ENCODE measurements at regions of chr19 and their contacts with region 1.

Region 1: DNA sequence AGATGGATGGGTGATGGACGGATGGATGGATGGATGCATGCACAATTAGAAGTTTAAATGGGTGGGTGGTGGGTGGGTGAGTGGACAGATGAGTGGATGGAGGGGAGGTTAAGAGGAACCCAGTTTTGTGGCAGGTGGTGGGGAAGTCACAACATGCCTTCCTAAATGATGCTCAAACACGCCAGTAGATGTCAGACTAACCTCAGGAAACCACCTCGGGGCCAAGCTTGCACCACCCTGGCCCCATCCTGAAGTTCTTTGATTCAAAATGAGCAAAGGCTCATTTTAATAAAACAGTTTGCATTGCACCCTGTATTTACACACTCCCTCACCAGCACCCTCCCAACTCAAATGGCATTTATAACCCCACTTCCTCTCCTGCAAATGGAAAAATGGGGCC is 91.4 kb upstream of the CACNA1A start:
- DNase-seq: peak; percentile 18 to 44 (median 29)
- H3K4me3 ChIP-seq: no peak overlapping the region
- H3K27ac ChIP-seq: no peak overlapping the region
- H3K4me1 ChIP-seq: no peaks in the 10 kb centered on the region
- H3K27me3 ChIP-seq: no peaks in the 10 kb centered on the region
- CTCF ChIP-seq: peak in 2 of 3 donors; percentile 29 to 39
- EP300 ChIP-seq: no peak
- POLR2A ChIP-seq: no peak

Region 2: DNA sequence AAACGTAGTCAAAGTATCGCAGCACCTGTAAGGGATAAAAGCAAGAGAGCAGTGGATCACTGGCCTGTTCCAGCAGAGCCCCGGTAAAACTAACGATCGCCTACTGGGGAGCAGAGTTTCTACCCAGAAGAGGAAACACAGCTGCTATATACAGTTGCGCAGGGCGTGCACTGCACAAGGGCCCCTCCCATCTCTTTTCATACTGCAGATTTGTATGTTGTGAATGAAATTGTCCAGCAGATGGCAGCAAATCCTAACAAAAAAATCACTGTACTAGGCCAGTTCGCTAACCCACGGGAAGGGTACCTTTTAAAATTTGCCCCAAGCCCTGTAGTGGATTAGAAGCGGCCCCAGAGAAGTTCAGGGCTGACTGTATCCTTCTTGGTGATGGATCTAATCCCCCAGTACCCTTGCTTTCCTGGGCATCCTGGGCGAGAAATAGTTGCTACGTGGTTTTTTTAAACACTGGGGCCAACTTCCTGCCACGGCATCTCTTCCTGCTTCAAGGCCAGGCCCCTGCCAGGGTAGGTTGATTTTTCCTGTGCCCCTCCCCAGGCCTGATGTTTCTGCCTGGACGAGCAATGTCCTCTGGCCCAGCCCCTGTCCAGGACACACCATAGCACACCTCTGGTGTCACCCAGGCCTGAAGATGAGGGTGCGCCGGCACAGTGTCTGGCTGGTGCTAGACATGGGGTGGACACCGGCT is 320.4 kb before region 1 on chr19:
- intact Hi-C with region 1: loop called in 1 of 4 experiments (anchors 10 kb)
- DNase-seq: peak; percentile 18 to 49 (median 43)
- H3K4me3 ChIP-seq: no peak overlapping the region
- H3K27ac ChIP-seq: no peak overlapping the region
- H3K4me1 ChIP-seq: no peaks in the 10 kb centered on the region
- H3K27me3 ChIP-seq: no peaks in the 10 kb centered on the region
- CTCF ChIP-seq: peak; percentile 32 to 53 (median 37)
- EP300 ChIP-seq: no peak
- POLR2A ChIP-seq: no peak

Region 3: GRCh38 chr19:13727798-13728197 is 130.2 kb after region 1 on chr19:
- intact Hi-C with region 1: loop called in 1 of 4 experiments (anchors 10 kb)
- DNase-seq: no peak
- H3K4me3 ChIP-seq: no peak overlapping the region
- H3K27ac ChIP-seq: no peak overlapping the region
- H3K4me1 ChIP-seq: peaks cover 3% of the 10 kb centered on the region
- H3K27me3 ChIP-seq: no peaks in the 10 kb centered on the region
- CTCF ChIP-seq: no peak
- EP300 ChIP-seq: no peak
- POLR2A ChIP-seq: no peak

Region 4: DNA sequence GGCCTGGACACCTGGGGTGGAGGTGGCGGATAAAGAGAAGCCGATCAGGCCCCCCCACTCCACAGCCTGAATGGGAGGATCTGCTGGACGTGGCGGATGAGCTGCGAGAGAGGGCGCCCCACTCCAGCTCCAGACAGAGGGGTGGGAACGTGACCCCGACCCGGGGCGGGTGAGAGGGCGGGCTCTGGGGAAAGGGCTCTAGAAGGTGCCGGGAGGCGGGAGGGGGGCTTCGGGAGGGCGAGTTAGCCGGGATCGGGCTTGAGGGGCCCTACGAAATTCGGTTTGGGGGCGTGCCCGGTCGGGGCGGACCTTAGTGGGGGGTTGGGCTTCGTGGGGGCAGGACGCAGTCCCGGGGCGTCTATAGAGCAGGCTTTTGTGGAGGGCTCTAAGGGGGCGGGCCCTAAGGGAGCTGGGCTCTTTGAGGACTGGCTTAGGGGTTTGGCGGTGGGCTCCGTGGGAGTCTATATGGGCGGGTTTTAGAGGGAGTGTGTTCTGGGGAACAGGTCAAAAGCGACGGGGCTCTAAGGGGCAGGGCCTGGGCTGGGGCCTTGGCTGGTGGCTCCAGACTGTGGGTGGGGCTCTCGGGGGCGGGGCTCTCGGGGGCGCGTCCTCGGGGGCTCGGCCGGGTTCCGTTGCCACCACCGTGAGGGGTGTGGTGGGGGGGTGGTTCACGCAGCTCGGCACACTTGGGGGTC is 275.2 kb after region 1 on chr19:
- intact Hi-C with region 1: loop called in 2 of 4 experiments (anchors 5 to 10 kb)
- DNase-seq: peak in 2 of 5 donors; percentile 45 to 46
- H3K4me3 ChIP-seq: peak overlapping the region; percentile 12
- H3K27ac ChIP-seq: no peak overlapping the region
- H3K4me1 ChIP-seq: peaks cover 1% of the 10 kb centered on the region
- H3K27me3 ChIP-seq: no peaks in the 10 kb centered on the region
- CTCF ChIP-seq: no peak
- EP300 ChIP-seq: no peak
- POLR2A ChIP-seq: no peak

Region 5: GRCh38 chr19:14061756-14062562 is 464.3 kb after region 1 on chr19 and contains the start of gene PALM3:
- intact Hi-C with region 1: loop called in 1 of 4 experiments (anchors 10 kb)
- DNase-seq: no peak
- H3K4me3 ChIP-seq: no peak within 1 kb of the TSS
- H3K27ac ChIP-seq: no peak within 1 kb of the TSS
- H3K4me1 ChIP-seq: peaks cover 4% of the 10 kb centered on the region
- H3K27me3 ChIP-seq: no peaks in the 10 kb centered on the region
- CTCF ChIP-seq: no peak
- EP300 ChIP-seq: no peak
- POLR2A ChIP-seq: no peak
- total RNA-seq, gene PALM3: 0.17 to 2.6 (median 0.48) TPM in 5 of 7 donors, not detected in the others

Measured in ovary (tissue), 10 donors.